Right ventricle myocardium superior (tissue), 1 donor: ENCODE measurements at regions of chr14 and their contacts with region 1.

Region 1: GRCh38 chr14:67426983-67427606 is 15.1 kb upstream of the PLEK2 start:
- DNase-seq: peak; percentile 65
- ATAC-seq: peak; percentile 94

Region 2: DNA sequence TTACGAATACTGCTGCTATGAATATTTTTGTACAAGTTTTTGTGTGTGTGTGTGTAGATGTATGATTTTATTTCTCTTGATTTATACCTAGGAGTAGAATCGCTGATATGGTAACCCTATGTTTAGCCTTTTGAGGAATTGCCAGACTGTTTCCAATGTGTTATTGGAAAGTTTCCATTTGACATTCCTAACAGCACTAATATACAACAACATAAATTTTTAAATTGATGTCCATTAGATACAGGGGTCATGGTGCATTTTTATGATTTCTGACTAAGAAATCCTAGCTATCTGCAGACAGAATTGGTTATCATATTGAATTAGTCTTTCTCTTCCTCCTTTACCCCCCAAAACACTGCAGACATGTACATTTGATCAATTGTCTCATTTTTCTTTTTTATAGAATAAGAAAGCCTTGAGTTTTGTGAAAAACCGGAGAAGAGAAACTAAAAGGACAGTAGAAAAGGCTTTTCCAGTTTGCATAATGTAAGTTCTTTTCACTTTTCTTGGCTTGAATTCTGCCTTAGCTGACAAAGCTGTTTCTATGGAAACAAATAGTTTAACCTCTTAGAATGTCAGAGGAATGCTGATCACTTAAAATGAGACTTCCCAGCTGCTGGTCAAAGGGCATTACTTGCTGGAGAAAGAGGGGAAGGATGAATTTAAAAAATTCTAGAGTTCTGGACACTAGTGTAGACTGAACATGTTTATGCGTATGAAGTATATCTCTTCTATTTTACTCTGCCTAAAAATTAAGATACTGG is 157.6 kb before region 1 on chr14:
- intact Hi-C with region 1: no loop called
- DNase-seq: no peak
- ATAC-seq: peak; percentile 82

Region 3: GRCh38 chr14:67373347-67373746 is 53.7 kb before region 1 on chr14:
- intact Hi-C with region 1: no loop called
- DNase-seq: no peak
- ATAC-seq: no peak

Region 4: GRCh38 chr14:67487937-67488893 is 61.1 kb after region 1 on chr14 and contains the start of gene TMEM229B:
- intact Hi-C with region 1: loop called (anchors 5 kb)
- DNase-seq: peak; percentile 53
- ATAC-seq: no peak
- total RNA-seq, gene TMEM229B: 2.3 TPM

Region 5: GRCh38 chr14:67571272-67571850 is 144.3 kb after region 1 on chr14:
- intact Hi-C with region 1: loop called (anchors 2 kb)
- DNase-seq: peak; percentile 73
- ATAC-seq: peak; percentile 80

Region 6: DNA sequence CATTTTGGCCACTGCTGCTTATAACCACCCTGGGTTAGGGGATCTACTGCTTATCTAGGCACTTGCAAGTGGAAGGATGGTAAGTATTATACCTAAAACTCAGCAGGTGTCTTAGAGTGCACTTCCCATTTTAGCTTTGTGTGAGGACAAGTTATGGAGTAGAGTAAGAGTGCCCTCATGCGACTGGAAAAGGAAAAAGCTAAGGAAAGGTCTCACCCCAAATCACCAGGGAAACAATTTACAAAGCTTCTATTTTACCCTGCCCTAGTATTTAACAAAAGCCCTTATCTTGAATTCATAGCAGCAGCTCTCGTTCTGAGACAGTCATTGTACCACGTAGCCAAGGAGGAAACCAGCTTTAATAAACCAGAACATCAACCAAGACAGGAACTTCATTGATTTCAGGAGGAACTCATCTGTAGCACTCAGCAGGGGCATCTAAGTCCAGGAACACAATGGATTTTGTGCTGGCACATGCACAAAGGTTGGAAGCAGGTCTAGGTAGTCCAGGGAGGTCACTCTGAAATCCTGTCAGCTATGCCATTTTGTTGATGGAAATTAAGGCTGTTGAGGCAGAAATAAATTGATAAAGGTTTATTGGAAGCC is 277.5 kb after region 1 on chr14:
- intact Hi-C with region 1: loop called (anchors 5 kb)
- DNase-seq: no peak
- ATAC-seq: peak; percentile 92